ENCODE measurements at regions of chr11 and their contacts with region 1.

Region 1: DNA sequence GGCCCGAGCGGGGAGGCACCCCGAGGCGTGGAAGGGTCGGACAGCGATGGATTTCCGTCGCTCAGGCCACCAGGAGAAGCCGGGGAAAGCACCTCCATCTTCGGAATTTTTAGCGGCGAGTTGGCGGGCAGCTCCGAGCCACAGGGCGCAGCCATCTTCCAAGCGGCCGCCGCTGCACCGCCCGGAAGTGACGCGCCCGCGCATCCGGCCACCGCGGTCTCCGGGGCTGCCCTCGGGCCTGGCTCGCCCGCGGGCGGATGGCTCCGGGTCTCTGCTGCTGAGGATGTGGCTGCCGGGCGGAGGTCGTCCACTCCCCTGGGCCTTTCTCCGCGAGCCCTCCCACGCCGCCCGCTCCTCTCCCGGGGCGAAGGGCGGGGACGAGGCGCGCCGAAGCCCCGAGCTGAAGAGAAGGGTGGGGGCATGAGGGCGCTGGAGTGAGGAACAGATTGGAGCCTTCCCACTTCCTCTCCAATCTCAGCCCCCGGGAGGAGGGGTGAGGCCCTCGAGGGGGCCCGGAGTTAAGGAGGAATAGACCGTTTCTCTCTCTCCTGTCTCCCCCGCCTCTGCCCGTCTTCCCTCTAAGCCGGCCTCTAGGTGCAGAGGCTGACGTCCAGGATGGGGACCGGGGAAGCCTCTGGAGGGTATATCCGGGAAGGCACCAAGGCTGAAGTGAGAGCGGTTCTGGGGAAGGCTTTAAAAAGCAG is at the start of gene MSANTD2:
- DNase-seq: peak; percentile 90 to 94
- ATAC-seq: peak; percentile 97
- H3K4me3 ChIP-seq: peak within 1 kb of the TSS; percentile 95 to 97
- H3K27ac ChIP-seq: peak within 1 kb of the TSS; percentile 77 to 99
- H3K4me1 ChIP-seq: peaks cover 1 to 6% of the 10 kb centered on the region in 2 donors
- H3K27me3 ChIP-seq: no peaks in the 10 kb centered on the region
- total RNA-seq, gene MSANTD2: 21.5 to 23.6 TPM

Region 2: DNA sequence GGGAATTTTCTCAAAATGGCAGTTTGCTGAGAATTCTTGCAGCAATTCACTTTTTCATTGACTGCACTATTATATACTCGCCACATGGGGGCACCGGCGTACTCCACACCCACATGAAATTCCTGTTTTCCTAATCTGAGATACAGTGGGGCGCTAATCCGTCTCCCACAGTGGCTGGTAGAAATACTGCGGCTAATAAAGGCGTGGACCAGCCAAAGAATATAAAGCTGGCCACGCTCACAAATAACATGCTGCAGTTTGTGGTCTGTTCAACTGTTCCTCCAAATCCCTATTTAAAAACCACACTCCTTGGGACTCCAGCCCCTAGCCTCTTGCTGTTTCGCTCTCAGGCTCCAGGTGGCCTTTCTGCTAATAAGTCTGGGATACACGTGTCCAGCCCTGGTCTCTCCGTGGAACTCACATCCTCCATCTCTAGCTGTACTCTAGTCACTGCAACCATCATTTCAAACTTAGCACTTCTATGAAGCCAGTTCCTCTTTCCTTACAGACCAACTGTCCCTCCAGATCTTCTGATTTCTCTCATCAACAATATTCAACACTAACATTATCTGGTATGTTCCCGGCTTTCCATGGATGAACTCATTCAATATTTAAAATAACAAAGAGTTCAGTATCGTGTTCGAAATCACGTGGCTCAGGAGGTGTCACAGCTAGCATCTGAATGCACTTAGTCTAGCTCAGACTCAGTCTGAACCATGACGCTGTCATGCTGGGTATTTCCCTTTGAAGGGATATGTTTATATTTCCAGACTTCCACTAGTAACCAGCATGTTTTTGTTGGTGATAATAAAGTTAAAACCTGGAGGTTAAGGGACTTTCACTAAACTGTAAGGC is 155.7 kb before region 1 on chr11:
- intact Hi-C with region 1: loop called in 1 of 2 experiments (anchors 10 kb)
- DNase-seq: peak; percentile 53 to 79
- ATAC-seq: peak; percentile 94
- H3K4me3 ChIP-seq: peak overlapping the region in 1 of 2 donors; percentile 58
- H3K27ac ChIP-seq: peak overlapping the region in 1 of 2 donors; percentile 79
- H3K4me1 ChIP-seq: peaks cover 0 to 1% of the 10 kb centered on the region in 2 donors
- H3K27me3 ChIP-seq: no peaks in the 10 kb centered on the region

Region 3: DNA sequence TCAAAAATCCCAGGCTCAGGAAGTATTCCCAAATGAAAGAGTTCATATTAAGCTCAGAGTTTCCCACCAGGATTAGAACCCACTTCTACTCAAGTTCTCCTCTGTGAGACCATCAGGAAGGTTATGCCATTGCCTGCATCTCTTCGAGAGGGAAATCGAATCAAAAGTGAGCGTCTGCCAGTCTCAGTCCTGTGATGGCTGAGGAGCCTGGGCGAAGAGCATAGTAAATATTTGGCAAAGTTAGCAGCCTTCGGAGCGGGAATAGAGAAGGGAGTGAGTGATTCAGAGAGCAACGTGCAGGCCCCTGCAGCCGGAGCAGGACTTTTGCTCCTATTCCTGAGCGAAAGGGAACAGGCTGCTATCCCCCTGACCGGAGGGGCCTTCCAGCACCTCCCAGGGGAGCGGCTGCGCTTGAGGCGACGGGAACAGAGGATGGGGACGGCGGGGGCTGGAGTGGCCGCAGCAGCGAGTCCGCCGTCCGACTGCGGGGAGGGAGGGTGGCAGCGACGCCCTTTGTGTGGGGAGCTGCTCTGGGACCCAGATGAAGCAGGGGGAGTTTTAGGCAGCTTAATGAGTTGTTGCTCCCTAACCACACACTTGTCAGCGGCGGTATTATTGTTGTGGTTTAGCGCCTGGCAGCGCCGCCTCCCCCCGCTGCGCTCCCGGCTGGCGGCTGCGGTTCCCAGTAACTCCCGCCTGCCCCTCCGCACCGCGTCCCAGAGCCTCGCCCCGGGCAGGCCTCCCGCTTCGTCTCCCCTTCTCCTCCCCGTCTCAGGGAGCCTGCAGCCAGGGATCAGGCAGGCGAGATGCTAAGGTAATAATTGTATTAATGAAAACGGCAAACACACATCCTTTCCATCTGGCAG is 82.4 kb before region 1 on chr11:
- intact Hi-C with region 1: no loop called
- DNase-seq: peak; percentile 64 to 79
- ATAC-seq: peak; percentile 60
- H3K4me3 ChIP-seq: peak overlapping the region in 1 of 2 donors; percentile 15
- H3K27ac ChIP-seq: peak overlapping the region in 1 of 2 donors; percentile 1
- H3K4me1 ChIP-seq: no peaks in the 10 kb centered on the region
- H3K27me3 ChIP-seq: no peaks in the 10 kb centered on the region

Region 4: GRCh38 chr11:124763156-124763947 is 37.0 kb before region 1 on chr11:
- intact Hi-C with region 1: loop called (anchors 2 to 5 kb)
- DNase-seq: peak; percentile 89 to 97
- ATAC-seq: peak; percentile 38
- H3K4me3 ChIP-seq: peak overlapping the region; percentile 57 to 68
- H3K27ac ChIP-seq: peak overlapping the region in 1 of 2 donors; percentile 66
- H3K4me1 ChIP-seq: no peaks in the 10 kb centered on the region
- H3K27me3 ChIP-seq: no peaks in the 10 kb centered on the region

Region 5: DNA sequence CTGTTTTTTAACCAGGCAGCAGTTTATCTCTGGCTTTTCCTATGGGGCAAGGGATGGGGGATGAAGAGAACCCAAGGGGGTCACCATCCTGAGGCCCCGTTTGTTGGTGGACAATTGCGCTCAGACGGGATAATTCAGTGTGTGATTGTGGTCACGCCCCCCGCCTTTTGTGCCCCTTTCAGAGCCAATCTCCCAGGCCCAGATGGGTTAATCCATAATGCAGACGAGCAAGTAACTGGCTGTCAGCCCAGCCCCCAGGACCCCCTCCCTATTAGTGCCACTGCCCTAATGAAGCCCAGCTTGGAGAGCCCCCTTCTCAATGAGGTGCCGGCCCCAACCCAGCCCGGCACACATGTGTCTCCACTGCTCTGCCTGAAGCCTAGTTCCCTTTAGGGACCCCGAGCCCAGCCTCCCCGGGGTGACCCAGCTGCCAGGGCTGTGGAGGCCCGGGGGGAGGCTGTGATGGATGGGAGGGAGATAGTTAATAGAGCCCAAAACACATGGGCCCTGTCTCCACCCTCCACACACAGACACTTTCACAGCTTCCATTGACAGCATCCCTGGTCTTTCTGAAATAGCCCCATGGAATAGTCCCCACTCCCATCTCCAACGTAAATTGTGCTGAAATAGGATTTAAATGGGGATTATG is 45.8 kb after region 1 on chr11:
- intact Hi-C with region 1: no loop called
- DNase-seq: no peak
- ATAC-seq: no peak
- H3K4me3 ChIP-seq: no peak overlapping the region
- H3K27ac ChIP-seq: no peak overlapping the region
- H3K4me1 ChIP-seq: no peaks in the 10 kb centered on the region
- H3K27me3 ChIP-seq: no peaks in the 10 kb centered on the region